Transverse colon (tissue), 4 donors: ENCODE measurements at regions of chr1 and their contacts with region 1.

Region 1: GRCh38 chr1:117045644-117046043 is 14.5 kb upstream of the TTF2 start:
- DNase-seq: no peak
- H3K4me3 ChIP-seq: no peak overlapping the region
- H3K27ac ChIP-seq: no peak overlapping the region
- H3K4me1 ChIP-seq: no peaks in the 10 kb centered on the region
- H3K27me3 ChIP-seq: no peaks in the 10 kb centered on the region
- CTCF ChIP-seq: no peak
- EP300 ChIP-seq: no peak
- POLR2A ChIP-seq: no peak

Region 2: GRCh38 chr1:116570358-116571200 is 475.1 kb before region 1 on chr1 and contains the start of gene CD58:
- in situ Hi-C with region 1: loop called (anchors 10 to 25 kb)
- intact Hi-C with region 1: loop called (anchors 10 kb)
- DNase-seq: peak; percentile 93
- H3K4me3 ChIP-seq: peak within 1 kb of the TSS; percentile 51 to 83 (median 67)
- H3K27ac ChIP-seq: peak within 1 kb of the TSS; percentile 96 to 99 (median 98)
- H3K4me1 ChIP-seq: peaks cover 0 to 37% (median 19%) of the 10 kb centered on the region in 4 donors
- H3K27me3 ChIP-seq: no peaks in the 10 kb centered on the region
- CTCF ChIP-seq: peak; percentile 64 to 85 (median 78)
- EP300 ChIP-seq: no peak
- POLR2A ChIP-seq: peak; percentile 88
- total RNA-seq, gene CD58: 1.8 to 48.7 (median 32.7) TPM